Activated T-helper 1 cell treated with anti-CD3 and anti-CD28 coated beads, Interleukin-12 subunit alpha, Interleukin-12 subunit beta, Interleukin-2, Interleukin-4 antibody, amounts not matched to agents 30 ng/mL and 10 ng/mL and 1 ng/mL, durations not matched to agents 14 hours and 24 hours and 36 hours (primary cell): ENCODE measurements at regions of chr17 and their contacts with region 1.

Region 1: DNA sequence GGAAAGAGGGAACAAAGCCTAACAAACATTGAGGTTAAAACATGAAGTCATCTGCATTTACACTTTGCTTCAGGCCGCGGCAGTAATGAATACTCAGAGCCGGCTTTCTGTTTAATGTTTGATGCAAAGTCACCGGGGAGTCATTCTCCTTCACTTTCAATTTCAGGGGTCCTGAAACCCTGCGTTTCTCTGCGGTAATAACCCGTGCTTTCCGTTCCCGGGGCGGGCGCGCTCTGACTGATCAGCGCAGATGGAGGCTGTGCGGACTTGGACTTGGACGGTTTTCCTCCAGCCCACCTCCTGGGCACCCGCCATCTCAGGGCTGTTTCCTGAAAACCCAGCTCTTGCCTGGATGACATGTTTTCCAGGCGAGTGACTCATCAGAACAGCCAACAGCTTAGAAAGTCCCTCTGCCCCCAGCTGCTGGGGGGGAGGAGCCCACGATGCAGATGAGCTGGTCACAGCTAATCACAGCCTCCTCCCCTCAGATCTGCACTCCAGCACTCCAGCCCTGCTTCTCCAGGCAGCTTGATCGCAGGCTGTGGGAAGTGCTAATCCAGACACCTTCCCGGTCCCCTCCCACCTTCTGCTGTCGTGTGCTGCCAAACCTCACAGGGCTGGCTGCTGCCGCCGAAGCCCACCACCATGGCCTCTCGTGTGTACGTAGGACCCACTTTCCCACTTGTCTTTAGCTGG is 158.6 kb upstream of the CHMP6 start:
- DNase-seq: peak; percentile 84
- H3K4me3 Mint-ChIP-seq: peak overlapping the region; percentile 76
- H3K27ac Mint-ChIP-seq: peak overlapping the region; percentile 91
- H3K4me1 Mint-ChIP-seq: peaks cover 60% of the 10 kb centered on the region
- H3K27me3 Mint-ChIP-seq: no peaks in the 10 kb centered on the region

Region 2: DNA sequence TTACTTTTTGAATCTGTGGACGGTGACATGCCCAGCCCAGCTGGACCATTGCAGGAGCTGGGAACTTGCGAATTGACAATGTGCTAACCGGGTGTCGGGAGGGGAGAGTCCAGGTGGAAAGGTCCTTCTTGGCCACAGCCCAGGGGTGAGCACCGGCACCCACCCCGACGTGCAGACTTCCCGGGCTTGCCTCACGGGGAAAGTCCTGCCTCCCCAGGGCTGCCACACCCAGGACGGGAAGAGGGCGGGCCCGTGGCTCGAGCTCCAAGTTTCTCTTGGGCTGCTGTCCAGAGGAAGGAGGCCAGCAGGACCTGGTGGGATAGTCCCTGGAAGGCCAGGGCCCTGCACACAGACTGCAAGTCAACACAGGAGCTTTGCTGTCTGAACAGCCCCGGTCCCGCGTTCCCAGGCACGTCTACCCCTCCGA is 645.5 kb before region 1 on chr17:
- intact Hi-C with region 1: no loop called
- DNase-seq: no peak
- H3K4me3 Mint-ChIP-seq: no peak overlapping the region
- H3K27ac Mint-ChIP-seq: no peak overlapping the region
- H3K4me1 Mint-ChIP-seq: no peaks in the 10 kb centered on the region
- H3K27me3 Mint-ChIP-seq: peaks cover 1% of the 10 kb centered on the region

Region 3: DNA sequence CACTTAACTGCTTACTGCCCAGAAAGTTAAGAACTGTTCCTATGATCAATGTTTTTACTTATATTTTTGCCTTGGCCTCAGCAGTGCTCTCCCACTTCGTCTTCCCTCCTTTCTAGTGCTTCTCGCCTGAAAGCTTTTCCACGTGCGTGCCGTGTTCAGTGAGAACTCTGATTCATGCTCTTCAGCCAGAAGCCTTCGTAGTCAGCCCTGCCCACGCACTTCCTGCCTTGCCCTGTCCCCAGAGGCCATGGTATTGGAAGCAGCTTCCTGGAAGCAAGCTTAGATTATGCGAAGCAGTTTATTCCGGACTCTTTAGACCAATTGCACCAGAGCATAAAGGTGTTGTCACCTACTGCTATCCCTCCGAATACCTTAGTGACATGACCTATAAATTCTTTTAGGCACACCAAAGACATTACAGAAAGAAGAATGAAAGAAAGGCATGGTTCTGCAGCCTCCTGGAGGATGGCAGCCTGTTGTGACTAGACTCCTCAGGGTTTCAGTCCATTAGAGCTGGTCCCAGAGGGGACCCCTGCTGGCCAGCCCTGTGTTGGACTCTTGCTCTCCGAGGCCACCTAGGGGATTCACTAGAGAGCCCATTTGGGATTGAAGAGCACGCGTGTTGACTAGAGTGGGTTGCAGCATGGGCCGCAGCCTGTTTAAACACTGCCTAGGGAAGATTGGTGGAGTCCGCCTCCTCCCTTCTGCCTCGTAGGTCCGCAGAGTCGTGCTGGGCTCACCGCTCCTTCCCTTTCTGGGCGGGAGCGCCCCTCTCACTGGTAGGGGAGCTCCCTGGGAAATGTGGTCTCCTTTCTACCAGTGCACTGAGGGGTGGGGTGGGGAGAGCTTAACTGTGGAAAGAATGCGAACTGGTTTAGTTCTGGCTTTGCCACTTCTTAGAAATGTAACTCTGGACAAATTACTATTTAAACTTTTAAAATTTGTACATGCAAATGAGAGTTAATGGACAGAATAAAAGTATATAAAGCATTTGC is 183.1 kb before region 1 on chr17:
- intact Hi-C with region 1: loop called (anchors 5 kb)
- DNase-seq: peak; percentile 56
- H3K4me3 Mint-ChIP-seq: peak overlapping the region; percentile 68
- H3K27ac Mint-ChIP-seq: peak overlapping the region; percentile 90
- H3K4me1 Mint-ChIP-seq: peaks cover 71% of the 10 kb centered on the region
- H3K27me3 Mint-ChIP-seq: no peaks in the 10 kb centered on the region

Region 4: DNA sequence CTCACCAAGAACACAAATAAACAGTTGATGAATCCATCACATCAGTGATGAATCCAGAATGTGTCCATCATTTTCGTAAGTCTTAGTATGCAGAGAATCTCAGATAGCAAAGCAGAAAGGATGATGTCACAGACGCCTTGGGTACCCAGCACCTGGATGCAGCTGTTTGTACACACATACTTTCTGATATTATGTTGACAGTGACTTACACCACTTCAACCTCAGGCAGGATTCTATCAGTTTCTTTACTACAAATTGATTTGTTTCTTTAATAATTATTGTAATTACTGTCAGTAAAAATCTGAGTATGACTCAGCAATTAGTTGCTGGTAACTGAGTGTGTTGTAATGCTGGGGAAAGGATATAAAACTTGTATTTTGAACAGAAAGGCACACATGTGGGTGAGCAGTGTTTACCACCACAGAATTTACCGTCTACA is 128.6 kb before region 1 on chr17:
- intact Hi-C with region 1: no loop called
- DNase-seq: no peak
- H3K4me3 Mint-ChIP-seq: peak overlapping the region; percentile 32
- H3K27ac Mint-ChIP-seq: peak overlapping the region; percentile 46
- H3K4me1 Mint-ChIP-seq: peaks cover 82% of the 10 kb centered on the region
- H3K27me3 Mint-ChIP-seq: no peaks in the 10 kb centered on the region

Region 5: DNA sequence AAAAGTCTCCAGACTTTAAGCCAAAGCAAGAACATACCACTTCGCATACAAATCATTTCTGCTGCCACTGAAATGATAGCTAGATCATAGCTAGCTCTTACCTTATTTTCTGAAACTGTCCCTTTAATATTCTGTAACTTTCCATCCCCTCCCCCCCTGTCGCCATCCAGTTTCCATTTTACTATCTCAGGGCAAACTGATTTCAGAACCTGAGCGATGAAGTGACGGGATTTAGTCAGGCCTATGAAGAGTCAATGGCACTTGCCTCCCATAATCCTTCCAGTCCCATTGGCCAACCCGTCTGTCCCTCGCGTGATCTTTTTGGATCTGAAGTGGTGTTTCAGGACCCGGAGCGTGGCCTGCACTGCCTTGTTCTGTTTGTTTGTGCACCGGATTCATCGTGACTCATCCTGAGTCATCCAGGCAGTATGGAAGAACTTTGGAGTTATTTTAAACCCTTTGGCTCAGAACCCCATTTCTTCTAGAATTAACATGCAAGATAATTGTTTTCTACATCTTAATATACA is 41.2 kb before region 1 on chr17:
- intact Hi-C with region 1: loop called (anchors 1 kb)
- DNase-seq: peak; percentile 49
- H3K4me3 Mint-ChIP-seq: peak overlapping the region; percentile 79
- H3K27ac Mint-ChIP-seq: peak overlapping the region; percentile 99
- H3K4me1 Mint-ChIP-seq: peaks cover 91% of the 10 kb centered on the region
- H3K27me3 Mint-ChIP-seq: no peaks in the 10 kb centered on the region

Region 6: GRCh38 chr17:80866147-80866793 is 33.2 kb after region 1 on chr17:
- intact Hi-C with region 1: loop called (anchors 2 kb)
- DNase-seq: peak; percentile 62
- H3K4me3 Mint-ChIP-seq: peak overlapping the region; percentile 48
- H3K27ac Mint-ChIP-seq: peak overlapping the region; percentile 84
- H3K4me1 Mint-ChIP-seq: peaks cover 88% of the 10 kb centered on the region
- H3K27me3 Mint-ChIP-seq: no peaks in the 10 kb centered on the region

Region 7: GRCh38 chr17:80891397-80892018 is 58.5 kb after region 1 on chr17:
- intact Hi-C with region 1: loop called (anchors 1 kb)
- DNase-seq: peak; percentile 79
- H3K4me3 Mint-ChIP-seq: peak overlapping the region; percentile 73
- H3K27ac Mint-ChIP-seq: peak overlapping the region; percentile 87
- H3K4me1 Mint-ChIP-seq: peaks cover 73% of the 10 kb centered on the region
- H3K27me3 Mint-ChIP-seq: no peaks in the 10 kb centered on the region

Region 8: DNA sequence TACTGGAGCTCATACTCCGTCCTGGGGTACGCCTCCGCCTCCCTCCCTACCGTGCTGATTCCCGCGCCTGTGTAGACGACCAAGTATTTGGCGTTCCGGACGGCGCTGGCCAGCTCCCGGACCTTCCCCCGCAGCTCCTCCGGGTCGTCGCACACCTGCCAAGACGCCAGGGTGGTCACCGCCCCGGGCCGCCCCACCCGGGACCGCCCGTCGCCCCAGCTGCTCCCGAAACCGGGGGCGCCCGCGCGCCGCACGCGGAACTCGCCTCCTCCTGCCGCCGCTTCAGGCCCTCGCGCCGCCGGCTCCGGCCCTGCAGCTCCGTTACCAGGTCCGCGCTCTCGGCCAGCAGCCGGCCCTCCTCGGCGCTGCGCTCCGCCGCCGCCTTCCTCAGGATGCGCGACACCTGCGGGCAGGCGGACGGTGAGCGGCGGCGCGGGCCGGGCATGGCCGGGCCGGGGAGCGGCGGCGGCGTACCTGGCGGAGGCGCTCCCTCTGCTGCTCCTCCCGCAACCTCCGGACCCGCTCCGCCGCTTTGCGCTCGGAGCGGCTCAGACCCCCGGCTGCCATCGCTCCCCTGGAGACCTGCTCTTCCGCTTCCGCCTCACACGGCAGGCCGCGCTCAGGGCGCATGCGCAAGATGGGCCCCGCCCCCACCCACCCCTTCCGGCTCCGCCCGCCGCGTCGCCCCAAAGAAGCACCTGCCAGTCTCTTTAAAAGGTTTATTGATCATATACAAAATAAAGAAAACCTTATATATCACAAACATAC is 1084.7 kb after region 1 on chr17 and contains the start of gene SIRT7:
- intact Hi-C with region 1: no loop called
- DNase-seq: peak; percentile 72
- H3K4me3 Mint-ChIP-seq: peak within 1 kb of the TSS; percentile 90
- H3K27ac Mint-ChIP-seq: peak within 1 kb of the TSS; percentile 87
- H3K4me1 Mint-ChIP-seq: peaks cover 37% of the 10 kb centered on the region
- H3K27me3 Mint-ChIP-seq: no peaks in the 10 kb centered on the region
- total RNA-seq, gene SIRT7: 53.2 and 57.5 TPM in 2 replicates